Panc1 (cell line): ENCODE measurements at regions of chr5 and their contacts with region 1.

Region 1: DNA sequence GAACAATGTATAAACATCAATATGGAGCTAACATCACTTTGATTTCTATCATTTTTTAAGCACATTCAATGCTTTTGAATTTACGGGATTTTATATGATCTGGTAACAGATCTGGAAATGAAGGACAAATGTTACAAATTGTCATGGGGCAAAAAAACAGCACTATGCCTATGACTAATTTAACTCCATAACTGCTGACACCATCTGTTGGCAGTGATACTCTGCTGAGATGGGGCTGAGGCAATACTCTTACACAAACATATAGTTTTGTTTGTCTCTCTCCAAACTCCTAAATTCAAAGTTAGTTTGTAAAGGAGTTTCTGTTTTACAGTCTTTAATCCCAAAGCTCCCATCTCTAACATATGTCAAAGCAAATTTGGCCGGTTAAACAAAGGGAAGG is 132.5 kb upstream of the FER start:
- DNase-seq: no peak
- ATAC-seq: no peak
- H3K4me3 ChIP-seq: no peak overlapping the region
- H3K27ac ChIP-seq: no peak overlapping the region
- H3K4me1 ChIP-seq: no peaks in the 10 kb centered on the region
- H3K27me3 ChIP-seq: peaks cover 6% of the 10 kb centered on the region; the same call in 1 of the 2 replicates
- CTCF ChIP-seq: no peak

Region 2: GRCh38 chr5:108487951-108488350 is 127.3 kb before region 1 on chr5:
- CTCF ChIA-PET with region 1: no interaction called
- POLR2A ChIA-PET with region 1: no interaction called
- in situ Hi-C with region 1: no loop called
- intact Hi-C with region 1: no loop called
- DNase-seq: no peak
- ATAC-seq: no peak
- H3K4me3 ChIP-seq: no peak overlapping the region
- H3K27ac ChIP-seq: no peak overlapping the region
- H3K4me1 ChIP-seq: no peaks in the 10 kb centered on the region
- H3K27me3 ChIP-seq: 0 out of 2 replicates have a peak, but pooled peaks cover 2% of the 10 kb centered on the region
- CTCF ChIP-seq: no peak

Region 3: GRCh38 chr5:108521841-108522506 is 93.2 kb before region 1 on chr5:
- CTCF ChIA-PET with region 1: no interaction called
- POLR2A ChIA-PET with region 1: no interaction called
- in situ Hi-C with region 1: no loop called
- intact Hi-C with region 1: loop called (anchors 5 kb)
- DNase-seq: peak; percentile 45
- ATAC-seq: peak; percentile 87
- H3K4me3 ChIP-seq: no peak overlapping the region
- H3K27ac ChIP-seq: no peak overlapping the region
- H3K4me1 ChIP-seq: no peaks in the 10 kb centered on the region
- H3K27me3 ChIP-seq: no peaks in the 10 kb centered on the region
- CTCF ChIP-seq: peak; percentile 73

Region 4: DNA sequence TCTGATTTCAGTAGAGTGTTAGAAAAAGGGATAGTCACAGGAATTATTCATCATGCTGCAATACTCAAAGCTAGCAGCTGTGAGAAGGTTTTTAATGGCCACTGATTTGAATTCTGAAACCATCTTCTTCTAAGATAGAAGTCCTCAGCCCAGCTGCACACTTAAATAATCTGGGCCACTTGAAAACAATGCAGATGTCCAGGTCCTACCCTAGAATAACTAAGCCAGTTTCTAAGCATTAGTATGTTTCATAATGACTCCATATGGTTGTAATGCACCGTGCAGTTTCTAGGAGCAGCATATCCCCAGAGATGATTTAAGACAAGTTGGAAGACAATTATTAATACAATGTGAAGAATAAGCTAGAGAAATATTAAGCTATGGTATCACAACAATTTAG is 73.4 kb before region 1 on chr5:
- CTCF ChIA-PET with region 1: no interaction called
- POLR2A ChIA-PET with region 1: no interaction called
- in situ Hi-C with region 1: no loop called
- intact Hi-C with region 1: no loop called
- DNase-seq: no peak
- ATAC-seq: no peak
- H3K4me3 ChIP-seq: no peak overlapping the region
- H3K27ac ChIP-seq: no peak overlapping the region
- H3K4me1 ChIP-seq: no peaks in the 10 kb centered on the region
- H3K27me3 ChIP-seq: peaks cover 8% of the 10 kb centered on the region; the same call in 1 of the 2 replicates
- CTCF ChIP-seq: no peak

Region 5: GRCh38 chr5:110435222-110435621 is 1820.0 kb after region 1 on chr5:
- CTCF ChIA-PET with region 1: no interaction called
- POLR2A ChIA-PET with region 1: no interaction called
- in situ Hi-C with region 1: no loop called
- intact Hi-C with region 1: no loop called
- DNase-seq: no peak
- ATAC-seq: no peak
- H3K4me3 ChIP-seq: no peak overlapping the region
- H3K27ac ChIP-seq: no peak overlapping the region
- H3K4me1 ChIP-seq: no peaks in the 10 kb centered on the region
- H3K27me3 ChIP-seq: no peaks in the 10 kb centered on the region
- CTCF ChIP-seq: no peak